Transverse colon (tissue), 4 donors: ENCODE measurements at regions of chr13 and their contacts with region 1.

Region 1: GRCh38 chr13:106402866-106403265 is 132.6 kb downstream of the EFNB2 start:
- DNase-seq: no peak
- H3K4me3 ChIP-seq: no peak overlapping the region
- H3K27ac ChIP-seq: no peak overlapping the region
- H3K4me1 ChIP-seq: no peaks in the 10 kb centered on the region
- H3K27me3 ChIP-seq: no peaks in the 10 kb centered on the region
- CTCF ChIP-seq: no peak
- EP300 ChIP-seq: no peak
- POLR2A ChIP-seq: no peak

Region 2: GRCh38 chr13:105894697-105895096 is 508.2 kb before region 1 on chr13:
- in situ Hi-C with region 1: no loop called
- intact Hi-C with region 1: no loop called
- DNase-seq: no peak
- H3K4me3 ChIP-seq: no peak overlapping the region
- H3K27ac ChIP-seq: no peak overlapping the region
- H3K4me1 ChIP-seq: no peaks in the 10 kb centered on the region
- H3K27me3 ChIP-seq: no peaks in the 10 kb centered on the region
- CTCF ChIP-seq: no peak
- EP300 ChIP-seq: no peak
- POLR2A ChIP-seq: no peak

Region 3: DNA sequence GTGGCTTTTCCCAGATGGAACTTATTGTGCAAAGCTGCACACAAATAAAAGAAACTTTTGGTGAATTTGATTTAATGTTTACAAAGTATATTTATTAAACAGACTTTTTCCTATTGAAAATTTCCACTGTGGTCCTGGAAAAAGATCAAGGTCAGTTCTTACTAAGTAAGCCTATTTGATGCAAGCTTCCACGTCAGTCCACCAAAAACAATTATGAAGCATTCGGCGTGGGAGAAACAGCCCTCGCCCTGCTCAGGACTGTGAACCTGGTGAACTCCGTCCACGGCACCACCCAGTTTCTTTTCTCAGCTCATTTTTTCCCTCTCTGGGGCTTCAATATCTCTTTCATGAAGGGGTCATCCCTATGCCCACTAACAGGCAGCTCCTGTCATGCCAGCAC is 17.2 kb before region 1 on chr13:
- in situ Hi-C with region 1: no loop called
- intact Hi-C with region 1: loop called (anchors 1 kb)
- DNase-seq: no peak
- H3K4me3 ChIP-seq: no peak overlapping the region
- H3K27ac ChIP-seq: no peak overlapping the region
- H3K4me1 ChIP-seq: peaks cover 0 to 10% (median 0%) of the 10 kb centered on the region in 4 donors
- H3K27me3 ChIP-seq: no peaks in the 10 kb centered on the region
- CTCF ChIP-seq: no peak
- EP300 ChIP-seq: no peak
- POLR2A ChIP-seq: no peak

Region 4: DNA sequence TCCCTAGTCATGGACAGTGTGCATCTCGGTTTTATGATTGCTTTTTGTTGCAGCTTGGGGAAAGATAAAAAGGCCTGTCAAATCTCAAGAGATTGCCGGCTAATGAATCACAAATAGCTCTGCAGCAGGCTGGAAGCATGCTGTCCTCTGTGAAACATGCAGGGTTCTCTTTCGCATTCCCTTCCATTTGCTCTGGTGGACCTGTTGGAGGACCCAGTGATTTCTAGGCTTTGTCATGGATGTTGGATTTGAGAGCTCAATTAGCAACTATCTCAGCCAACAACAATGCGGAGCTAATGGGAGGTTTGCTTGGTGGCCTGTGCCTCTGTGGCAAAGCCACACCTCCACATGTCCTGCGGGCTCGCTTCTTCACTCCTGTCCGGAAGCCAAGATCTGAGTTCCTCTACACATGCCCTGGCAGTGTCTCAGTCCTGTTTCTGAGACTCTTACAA is 583.2 kb after region 1 on chr13:
- in situ Hi-C with region 1: no loop called
- intact Hi-C with region 1: no loop called
- DNase-seq: no peak
- H3K4me3 ChIP-seq: no peak overlapping the region
- H3K27ac ChIP-seq: no peak overlapping the region
- H3K4me1 ChIP-seq: no peaks in the 10 kb centered on the region
- H3K27me3 ChIP-seq: no peaks in the 10 kb centered on the region
- CTCF ChIP-seq: no peak
- EP300 ChIP-seq: no peak
- POLR2A ChIP-seq: no peak